ENCODE measurements at regions of chr16 and their contacts with region 1.

Region 1: DNA sequence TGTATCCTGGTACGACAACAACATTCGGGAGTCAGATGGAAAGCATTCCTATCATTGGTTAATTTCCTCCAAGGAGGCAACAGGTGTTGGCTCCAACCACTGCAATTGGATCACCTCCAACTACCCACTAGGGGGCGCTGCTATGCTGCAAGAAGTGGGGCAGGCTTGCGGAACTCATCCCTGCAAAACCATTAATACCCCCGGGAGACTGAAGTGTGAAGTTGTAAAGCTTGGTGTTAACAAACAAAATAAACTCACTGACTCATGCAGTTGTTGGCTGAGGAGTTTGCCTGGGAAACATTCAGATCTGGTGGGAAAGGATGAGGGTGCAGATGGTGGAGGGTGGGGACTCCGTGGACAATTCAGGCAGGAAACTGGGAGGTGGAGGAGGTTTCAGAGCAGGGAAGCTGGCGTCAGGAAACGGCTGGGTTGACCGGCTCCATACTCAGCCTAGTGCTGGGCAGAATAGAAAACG is 84.9 kb downstream of the HS3ST2 start:
- DNase-seq: peak; percentile 76
- H3K4me3 Mint-ChIP-seq: no peak overlapping the region
- H3K27ac Mint-ChIP-seq: no peak overlapping the region
- H3K4me1 Mint-ChIP-seq: no peaks in the 10 kb centered on the region
- H3K27me3 Mint-ChIP-seq: peaks cover 19% of the 10 kb centered on the region

Region 2: DNA sequence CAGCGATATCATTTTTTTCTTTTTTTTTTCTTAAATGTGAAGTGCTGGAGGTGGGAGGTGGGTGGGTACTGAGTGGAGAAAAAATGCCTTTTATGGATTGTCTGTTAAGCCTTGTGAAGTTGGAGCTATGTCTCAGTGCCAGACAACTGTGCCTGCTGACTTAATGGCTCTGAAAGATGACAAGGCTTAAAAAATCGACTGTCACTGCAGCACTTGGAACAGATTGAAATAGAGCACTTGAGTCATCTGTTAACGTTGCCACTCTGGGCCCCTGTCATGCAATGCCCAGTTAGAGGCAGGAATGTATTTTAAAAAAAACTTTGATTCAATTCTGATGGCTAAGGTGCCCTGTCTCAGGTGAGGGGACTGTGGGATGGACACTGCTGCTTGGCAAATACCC is 193.1 kb before region 1 on chr16:
- CTCF ChIA-PET with region 1: no interaction called
- intact Hi-C with region 1: no loop called
- DNase-seq: no peak
- H3K4me3 Mint-ChIP-seq: no peak overlapping the region
- H3K27ac Mint-ChIP-seq: no peak overlapping the region
- H3K4me1 Mint-ChIP-seq: no peaks in the 10 kb centered on the region
- H3K27me3 Mint-ChIP-seq: peaks cover 2% of the 10 kb centered on the region

Region 3: GRCh38 chr16:22948603-22949368 is 49.9 kb after region 1 on chr16:
- CTCF ChIA-PET with region 1: interaction called, 3 read pairs
- intact Hi-C with region 1: loop called (anchors 2 kb)
- DNase-seq: peak; percentile 89
- H3K4me3 Mint-ChIP-seq: no peak overlapping the region
- H3K27ac Mint-ChIP-seq: no peak overlapping the region
- H3K4me1 Mint-ChIP-seq: peaks cover 8% of the 10 kb centered on the region
- H3K27me3 Mint-ChIP-seq: peaks cover 38% of the 10 kb centered on the region

Region 4: DNA sequence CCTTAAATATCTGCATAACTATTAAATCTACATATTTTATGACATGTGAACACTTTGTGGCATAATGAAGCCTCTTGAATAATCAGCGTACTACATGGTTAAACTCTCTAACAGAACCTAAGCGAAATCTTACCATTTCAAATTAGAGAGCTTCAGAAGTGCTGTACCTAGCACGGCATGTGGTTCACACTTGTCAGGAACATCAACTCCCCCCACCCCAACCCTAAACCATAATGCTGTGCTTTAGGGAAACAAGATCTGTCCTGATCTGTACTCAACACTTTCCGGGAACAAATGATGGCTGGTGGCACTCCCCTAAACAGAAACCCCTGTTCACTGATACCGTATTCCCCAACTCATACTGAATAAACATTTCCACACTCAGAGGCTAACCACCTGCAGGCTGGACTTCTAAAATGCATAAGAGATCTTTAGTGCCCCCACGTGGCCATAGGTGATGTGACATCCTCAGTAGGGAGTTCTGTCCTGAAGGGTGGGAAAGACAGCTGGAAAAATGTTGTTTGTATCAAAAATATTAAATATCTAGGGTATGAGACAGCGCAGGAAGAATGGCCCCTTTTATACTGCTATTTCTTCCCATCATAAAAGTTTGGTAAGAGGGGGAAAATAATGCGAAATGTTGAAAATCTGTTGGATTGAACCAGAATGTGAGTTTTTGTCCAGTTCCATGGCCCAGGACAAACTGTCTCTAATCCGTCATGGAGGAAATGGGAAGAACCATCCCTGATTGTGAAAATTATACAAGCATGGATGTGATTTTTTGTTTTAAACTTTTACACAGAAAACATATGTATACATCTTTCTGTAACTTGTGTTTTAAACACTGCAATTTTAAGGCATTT is 161.8 kb after region 1 on chr16:
- CTCF ChIA-PET with region 1: no interaction called
- intact Hi-C with region 1: loop called (anchors 1 kb)
- DNase-seq: peak; percentile 78
- H3K4me3 Mint-ChIP-seq: no peak overlapping the region
- H3K27ac Mint-ChIP-seq: no peak overlapping the region
- H3K4me1 Mint-ChIP-seq: peaks cover 2% of the 10 kb centered on the region
- H3K27me3 Mint-ChIP-seq: peaks cover 19% of the 10 kb centered on the region

Region 5: GRCh38 chr16:23302045-23302956 is 403.4 kb after region 1 on chr16 and contains the start of gene SCNN1B:
- CTCF ChIA-PET with region 1: no interaction called
- intact Hi-C with region 1: no loop called
- DNase-seq: no peak
- H3K4me3 Mint-ChIP-seq: no peak within 1 kb of the TSS
- H3K27ac Mint-ChIP-seq: no peak within 1 kb of the TSS
- H3K4me1 Mint-ChIP-seq: peaks cover 7% of the 10 kb centered on the region
- H3K27me3 Mint-ChIP-seq: peaks cover 33% of the 10 kb centered on the region
- total RNA-seq, gene SCNN1B: not detected

Region 6: GRCh38 chr16:23466066-23466885 is 567.4 kb after region 1 on chr16:
- CTCF ChIA-PET with region 1: no interaction called
- intact Hi-C with region 1: no loop called
- DNase-seq: no peak
- H3K4me3 Mint-ChIP-seq: no peak overlapping the region
- H3K27ac Mint-ChIP-seq: peak overlapping the region; percentile 1
- H3K4me1 Mint-ChIP-seq: no peaks in the 10 kb centered on the region
- H3K27me3 Mint-ChIP-seq: no peaks in the 10 kb centered on the region